Heart right ventricle (tissue), 16 donors: ENCODE measurements at regions of chr7 and their contacts with region 1.

Region 1: GRCh38 chr7:158856883-158857668 is 718 bp downstream of the DYNC2I1 start:
- DNase-seq: no peak
- ATAC-seq: peak in 3 of 8 donors; percentile 2 to 40 (median 3)
- H3K4me3 ChIP-seq: peak overlapping the region; percentile 59 to 98 (median 86)
- H3K27ac ChIP-seq: peak overlapping the region; percentile 80 to 94 (median 90)
- H3K4me1 ChIP-seq: peaks cover 0 to 48% (median 32%) of the 10 kb centered on the region in 9 donors
- H3K27me3 ChIP-seq: no peaks in the 10 kb centered on the region
- CTCF ChIP-seq: no peak

Region 2: GRCh38 chr7:158613481-158613880 is 243.6 kb before region 1 on chr7:
- intact Hi-C with region 1: no loop called
- DNase-seq: no peak
- ATAC-seq: no peak
- H3K4me3 ChIP-seq: no peak overlapping the region
- H3K27ac ChIP-seq: no peak overlapping the region
- H3K4me1 ChIP-seq: no peaks in the 10 kb centered on the region
- H3K27me3 ChIP-seq: no peaks in the 10 kb centered on the region
- CTCF ChIP-seq: no peak

Region 3: GRCh38 chr7:158818325-158819213 is 38.5 kb before region 1 on chr7:
- intact Hi-C with region 1: loop called in 2 of 10 experiments (anchors 5 kb)
- DNase-seq: peak; percentile 83 to 91
- ATAC-seq: peak; percentile 82 to 94 (median 88)
- H3K4me3 ChIP-seq: peak overlapping the region in 9 of 10 donors; percentile 2 to 41 (median 36)
- H3K27ac ChIP-seq: peak overlapping the region; percentile 90 to 94 (median 92)
- H3K4me1 ChIP-seq: peaks cover 35 to 95% (median 88%) of the 10 kb centered on the region in 9 donors
- H3K27me3 ChIP-seq: no peaks in the 10 kb centered on the region
- CTCF ChIP-seq: peak in 2 of 9 donors; percentile 11 to 23